ENCODE measurements at regions of chr4 and their contacts with region 1.

Region 1: DNA sequence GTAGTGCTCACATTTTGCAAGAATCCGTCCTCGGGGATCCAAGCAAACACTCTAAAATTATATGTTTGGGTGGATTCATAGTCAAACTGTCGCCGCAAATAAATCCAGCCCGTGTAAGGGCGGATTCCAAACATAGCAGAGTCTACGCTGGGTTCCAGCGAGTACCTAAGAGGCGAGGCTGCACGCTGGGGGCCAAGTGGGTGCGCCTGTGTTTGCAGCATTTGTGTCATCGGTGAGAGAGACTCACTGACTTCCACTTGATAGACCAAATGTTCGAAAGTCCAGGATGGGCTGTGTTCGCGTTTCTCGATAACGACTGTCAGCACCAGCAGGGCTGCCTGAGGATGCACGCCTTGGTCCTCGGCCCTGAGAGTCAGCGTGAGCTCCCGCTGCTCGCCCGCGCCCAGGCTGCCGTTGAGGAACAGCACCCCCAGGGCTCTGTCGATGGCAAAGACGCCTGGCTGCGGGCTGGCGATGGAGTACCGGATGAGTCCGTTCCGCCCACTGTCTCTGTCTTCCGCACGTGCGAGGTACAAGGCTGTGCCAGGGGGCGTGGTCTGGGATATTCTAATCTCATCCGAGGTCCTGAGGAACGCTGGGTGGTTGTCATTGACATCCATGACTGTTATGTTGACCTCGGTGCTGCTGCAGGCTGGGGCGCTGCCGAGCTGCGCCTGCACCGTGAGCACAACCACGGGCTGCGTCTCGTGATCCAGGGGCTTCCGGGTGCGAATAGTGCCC is 158.7 kb downstream of the DCHS2 start:
- DNase-seq: peak; percentile 25 to 68 (median 60)
- ATAC-seq: peak; percentile 85
- H3K4me3 ChIP-seq: peak overlapping the region; percentile 39
- H3K4me3 Mint-ChIP-seq: peak overlapping the region; percentile 80 to 92 (median 86)
- H3K27ac ChIP-seq: no peak overlapping the region
- H3K27ac Mint-ChIP-seq: peak overlapping the region in 7 of 9 donors; percentile 29 to 86 (median 83)
- H3K4me1 ChIP-seq: no peaks in the 10 kb centered on the region
- H3K4me1 Mint-ChIP-seq: peaks cover 4 to 13% (median 12%) of the 10 kb centered on the region in 7 donors
- H3K27me3 ChIP-seq: no peaks in the 10 kb centered on the region
- H3K27me3 Mint-ChIP-seq: peaks cover 14 to 53% (median 19%) of the 10 kb centered on the region in 5 donors

Region 2: GRCh38 chr4:154349829-154350228 is 17.0 kb after region 1 on chr4:
- CTCF ChIA-PET with region 1: no interaction called
- POLR2A ChIA-PET with region 1: no interaction called
- intact Hi-C with region 1: loop called in 1 of 2 experiments (anchors 2 kb)
- DNase-seq: peak in 2 of 9 donors; percentile 5 to 19
- ATAC-seq: no peak
- H3K4me3 ChIP-seq: no peak overlapping the region
- H3K4me3 Mint-ChIP-seq: no peak overlapping the region
- H3K27ac ChIP-seq: no peak overlapping the region
- H3K27ac Mint-ChIP-seq: no peak overlapping the region
- H3K4me1 ChIP-seq: no peaks in the 10 kb centered on the region
- H3K4me1 Mint-ChIP-seq: no peaks in the 10 kb centered on the region
- H3K27me3 ChIP-seq: no peaks in the 10 kb centered on the region
- H3K27me3 Mint-ChIP-seq: peaks cover 5 to 35% (median 21%) of the 10 kb centered on the region in 5 donors

Region 3: DNA sequence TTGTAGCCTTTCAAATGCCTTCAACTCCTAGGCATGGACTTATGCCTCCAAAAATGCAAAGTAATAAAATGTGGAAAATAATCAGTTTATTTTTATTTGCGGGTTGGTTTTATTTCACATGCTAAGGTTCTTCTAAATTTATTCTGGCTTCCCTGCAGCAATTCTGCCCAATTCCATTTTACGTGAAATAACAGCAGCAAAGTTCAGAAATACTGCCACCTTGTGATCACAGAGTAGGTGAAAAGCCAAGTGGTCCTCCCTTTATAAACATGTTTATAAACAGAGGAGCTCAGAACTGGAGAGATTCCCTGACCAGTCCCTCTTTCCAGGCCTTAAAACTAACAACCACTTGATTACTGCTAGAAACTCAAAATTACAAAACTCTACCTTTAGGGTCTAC is 173.4 kb after region 1 on chr4:
- CTCF ChIA-PET with region 1: no interaction called
- POLR2A ChIA-PET with region 1: no interaction called
- intact Hi-C with region 1: loop called in 1 of 2 experiments (anchors 1 kb)
- DNase-seq: peak in 2 of 9 donors; percentile 4 to 24
- ATAC-seq: no peak
- H3K4me3 ChIP-seq: no peak overlapping the region
- H3K4me3 Mint-ChIP-seq: no peak overlapping the region
- H3K27ac ChIP-seq: no peak overlapping the region
- H3K27ac Mint-ChIP-seq: no peak overlapping the region
- H3K4me1 ChIP-seq: no peaks in the 10 kb centered on the region
- H3K4me1 Mint-ChIP-seq: no peaks in the 10 kb centered on the region
- H3K27me3 ChIP-seq: peaks cover 0 to 4% of the 10 kb centered on the region in 2 donors
- H3K27me3 Mint-ChIP-seq: peaks cover 22 to 47% (median 30%) of the 10 kb centered on the region in 5 donors

Region 4: DNA sequence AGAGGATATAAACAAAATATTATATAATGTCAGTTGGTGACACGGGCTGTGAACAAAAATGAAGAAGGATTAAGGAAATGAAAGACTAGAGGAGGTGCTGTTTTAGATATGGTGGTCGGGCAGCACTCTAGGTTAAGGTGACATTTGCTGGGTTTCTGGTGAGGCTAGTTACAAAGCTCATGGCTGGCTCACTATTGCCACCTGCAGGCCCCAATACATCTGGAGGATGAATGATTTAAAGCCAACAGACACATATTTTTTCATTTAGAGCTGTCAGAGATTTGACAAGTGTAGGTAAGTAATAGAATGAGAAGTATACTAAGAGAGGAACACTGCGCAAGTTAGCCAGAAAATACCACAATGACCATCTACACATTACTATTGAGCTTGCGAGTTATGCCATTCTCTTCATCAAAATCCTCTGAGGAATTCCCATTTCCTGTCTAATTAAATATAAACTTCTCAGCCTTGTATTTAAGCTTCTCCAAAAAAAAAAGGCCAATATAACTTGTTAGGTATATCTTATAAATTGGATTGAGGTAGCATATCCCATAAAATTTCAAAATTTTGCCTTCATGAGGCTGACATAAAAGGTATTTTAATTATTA is 286.0 kb after region 1 on chr4:
- CTCF ChIA-PET with region 1: no interaction called
- POLR2A ChIA-PET with region 1: no interaction called
- intact Hi-C with region 1: loop called (anchors 2 to 5 kb)
- DNase-seq: peak in 7 of 9 donors; percentile 25 to 51 (median 39)
- ATAC-seq: peak; percentile 76
- H3K4me3 ChIP-seq: no peak overlapping the region
- H3K4me3 Mint-ChIP-seq: no peak overlapping the region
- H3K27ac ChIP-seq: no peak overlapping the region
- H3K27ac Mint-ChIP-seq: peak overlapping the region in 1 of 9 donors; percentile 21
- H3K4me1 ChIP-seq: no peaks in the 10 kb centered on the region
- H3K4me1 Mint-ChIP-seq: peaks cover 0 to 18% (median 5%) of the 10 kb centered on the region in 7 donors
- H3K27me3 ChIP-seq: no peaks in the 10 kb centered on the region
- H3K27me3 Mint-ChIP-seq: peaks cover 0 to 23% (median 4%) of the 10 kb centered on the region in 5 donors

Measured in naive thymus-derived CD4-positive, alpha-beta T cell (primary cell).